BJ (cell line): ENCODE measurements at regions of chr2 and their contacts with region 1.

Region 1: DNA sequence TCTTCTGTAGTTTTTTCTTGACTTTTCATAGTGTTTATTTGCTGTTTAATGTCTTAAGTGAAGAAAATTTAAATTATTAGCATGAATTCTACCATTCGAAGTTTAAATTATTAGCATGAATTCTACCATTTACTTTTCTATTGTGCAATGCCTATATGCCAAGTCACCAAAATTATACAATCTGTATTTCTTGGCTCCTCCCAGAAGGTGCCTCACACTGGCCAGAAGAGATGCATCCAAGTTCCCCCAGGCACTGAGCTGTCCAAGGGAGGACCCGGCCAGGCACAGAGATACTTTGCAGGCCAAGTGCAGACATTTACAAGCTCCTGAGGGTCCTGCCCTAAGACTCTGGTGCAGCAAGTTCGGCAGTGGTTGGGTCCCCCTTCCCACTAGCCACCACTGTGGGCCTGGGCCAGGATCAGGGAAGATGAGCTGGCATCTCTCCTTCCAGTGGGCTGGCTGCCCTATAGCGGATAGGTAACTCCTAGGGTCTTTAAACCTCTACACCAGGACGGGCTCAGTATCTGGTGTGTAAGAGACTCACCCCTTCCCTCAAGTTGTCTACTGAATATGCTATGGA is 31.3 kb downstream of the TMEM247 start:
- DNase-seq: no peak
- H3K4me3 ChIP-seq: no peak overlapping the region
- H3K27me3 ChIP-seq: no peaks in the 10 kb centered on the region
- CTCF ChIP-seq: no peak

Region 2: DNA sequence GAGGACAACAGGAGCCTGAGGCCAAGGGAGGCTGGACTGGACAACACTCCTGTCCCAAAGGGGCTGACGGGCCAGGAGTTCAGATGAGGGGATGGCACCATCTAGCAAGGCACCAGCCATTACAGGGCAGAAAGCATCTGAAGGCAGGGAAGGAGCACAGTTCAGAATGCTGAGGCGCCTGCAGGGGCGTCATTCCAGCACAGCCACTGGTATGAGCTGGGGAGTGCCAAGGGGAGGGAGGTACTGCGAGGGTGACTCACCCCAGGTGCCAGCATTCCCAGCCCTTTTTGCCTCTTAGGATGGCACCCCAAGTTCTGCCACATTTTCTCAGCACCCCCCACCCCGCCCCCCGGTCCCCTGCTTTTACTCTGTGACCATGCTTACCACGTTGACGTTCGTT is 343.3 kb before region 1 on chr2:
- CTCF ChIA-PET with region 1: no interaction called
- POLR2A ChIA-PET with region 1: interaction called, 25 read pairs
- DNase-seq: no peak
- H3K4me3 ChIP-seq: no peak overlapping the region
- H3K27me3 ChIP-seq: no peaks in the 10 kb centered on the region
- CTCF ChIP-seq: no peak

Region 3: DNA sequence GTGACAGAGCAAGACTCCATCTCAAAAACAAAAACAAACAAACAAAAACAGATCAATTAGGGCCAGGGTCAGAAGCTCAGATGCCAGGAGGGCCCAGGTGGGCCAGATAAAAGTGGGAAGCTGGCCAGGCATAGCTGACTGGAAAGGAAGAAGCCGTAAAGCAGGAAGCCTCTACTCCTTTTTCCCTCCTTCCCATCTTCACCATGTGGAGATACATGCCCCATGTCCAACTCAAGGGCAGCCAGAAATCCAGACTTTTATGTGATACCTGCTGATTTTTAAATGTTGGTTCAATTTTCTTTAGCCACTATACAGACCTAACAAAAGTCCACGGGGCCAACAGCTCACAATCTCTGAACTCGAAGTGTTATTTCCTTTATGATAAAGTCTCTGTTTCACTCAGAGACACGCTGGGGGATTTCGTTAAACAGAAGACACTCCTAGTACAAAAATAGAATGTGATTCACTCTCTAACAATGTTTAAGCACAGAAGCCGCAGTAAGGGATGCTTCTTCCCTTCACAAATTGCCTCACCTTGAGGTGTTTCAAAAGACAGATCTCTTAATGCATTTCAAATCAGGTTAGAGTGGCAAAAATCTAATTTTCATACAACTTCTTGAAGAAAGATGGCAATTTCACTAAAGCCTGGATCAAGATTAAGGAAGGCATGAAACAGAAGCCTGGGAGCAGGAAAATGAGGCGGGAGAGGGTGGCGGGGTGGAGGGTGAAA is 17.3 kb before region 1 on chr2:
- CTCF ChIA-PET with region 1: no interaction called
- POLR2A ChIA-PET with region 1: no interaction called
- DNase-seq: no peak
- H3K4me3 ChIP-seq: no peak overlapping the region
- H3K27me3 ChIP-seq: no peaks in the 10 kb centered on the region
- CTCF ChIP-seq: no peak

Region 4: GRCh38 chr2:46578961-46579360 is 68.3 kb after region 1 on chr2:
- CTCF ChIA-PET with region 1: no interaction called
- POLR2A ChIA-PET with region 1: interaction called, 10 read pairs
- DNase-seq: no peak
- H3K4me3 ChIP-seq: no peak overlapping the region
- H3K27me3 ChIP-seq: no peaks in the 10 kb centered on the region
- CTCF ChIP-seq: no peak